ENCODE measurements at regions of chr1 and their contacts with region 1.

Region 1: GRCh38 chr1:17922833-17923232 is 167.7 kb downstream of the ACTL8 start:
- DNase-seq: no peak
- ATAC-seq: no peak

Region 2: GRCh38 chr1:17233675-17234074 is 689.2 kb before region 1 on chr1:
- intact Hi-C with region 1: no loop called
- DNase-seq: no peak
- ATAC-seq: peak; percentile 51

Region 3: GRCh38 chr1:17338706-17339493 is 583.9 kb before region 1 on chr1:
- intact Hi-C with region 1: no loop called
- DNase-seq: no peak
- ATAC-seq: no peak

Region 4: DNA sequence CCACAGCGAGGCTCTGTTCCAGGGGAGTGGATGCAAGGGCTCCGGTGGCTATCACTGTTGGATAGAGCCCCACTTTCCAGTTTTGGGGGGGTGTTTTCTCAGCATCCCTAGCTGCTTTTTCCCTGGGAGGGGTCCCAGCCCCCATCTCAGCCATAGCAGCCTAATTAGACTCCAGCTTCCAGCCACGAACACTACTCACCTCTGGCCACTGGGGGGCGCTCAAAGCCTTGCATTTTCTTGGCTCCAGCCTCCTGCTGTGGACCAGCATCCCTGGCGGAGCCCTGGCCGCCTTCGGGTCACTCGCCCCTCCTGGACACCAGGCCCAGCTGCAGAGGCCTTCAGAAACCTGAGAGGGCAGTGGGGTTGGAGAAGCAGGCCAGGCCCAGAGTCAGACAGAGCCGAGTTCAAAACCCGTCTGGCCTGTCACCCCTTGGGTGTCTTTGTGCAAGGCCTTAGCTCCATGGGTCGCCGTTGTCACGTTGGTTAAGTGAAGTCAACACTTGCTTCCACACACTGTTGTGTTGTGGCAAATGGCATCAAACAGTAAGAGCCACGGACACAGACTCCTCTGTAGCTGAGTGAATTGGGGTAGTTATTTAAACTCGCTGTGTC is 261.2 kb before region 1 on chr1:
- intact Hi-C with region 1: loop called (anchors 10 kb)
- DNase-seq: peak; percentile 67
- ATAC-seq: peak; percentile 56

Region 5: DNA sequence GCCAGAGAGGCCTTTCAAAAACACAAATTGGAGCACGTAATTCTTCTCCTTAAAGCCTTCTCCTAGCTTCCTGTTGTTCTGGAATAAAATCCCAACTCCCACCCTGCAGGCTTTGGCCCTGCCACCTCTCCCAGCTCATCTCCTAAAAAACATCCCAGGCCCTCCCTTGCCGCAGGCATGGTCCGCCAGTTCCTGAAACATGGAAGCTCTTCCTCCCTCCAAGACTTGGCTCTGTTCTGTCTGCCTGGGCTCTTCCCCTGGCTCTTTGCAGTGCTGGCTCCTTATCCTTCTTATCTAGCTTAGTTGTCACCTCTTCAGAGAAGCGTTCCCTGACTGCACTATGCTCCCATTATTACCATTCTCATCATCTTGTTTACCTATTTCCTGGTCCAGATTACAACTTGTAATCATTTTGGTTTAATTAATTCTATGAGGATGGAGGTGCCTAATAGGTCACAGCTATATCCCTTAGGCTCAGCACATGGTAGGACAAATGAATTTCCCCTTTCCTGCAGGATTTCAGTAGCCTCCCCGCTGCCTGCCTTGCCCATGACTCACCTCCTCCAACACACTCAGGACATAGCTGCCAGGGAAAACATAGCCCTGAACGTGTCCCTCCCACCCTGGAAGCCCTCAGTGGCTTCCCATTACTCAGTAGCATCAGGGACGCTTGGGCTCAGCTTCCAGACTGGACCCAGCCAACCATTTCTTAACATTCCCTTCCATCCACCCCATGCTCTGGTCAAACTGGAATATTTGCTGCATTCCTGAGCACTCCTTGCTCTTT is 169.0 kb after region 1 on chr1:
- intact Hi-C with region 1: loop called (anchors 10 kb)
- DNase-seq: no peak
- ATAC-seq: no peak

Measured in Right ventricle myocardium superior (tissue), 1 donor.